Activated B cell treated with CpG ODN at 0.5 μM for 24 hours (primary cell): ENCODE measurements at regions of chr1 and their contacts with region 1.

Region 1: DNA sequence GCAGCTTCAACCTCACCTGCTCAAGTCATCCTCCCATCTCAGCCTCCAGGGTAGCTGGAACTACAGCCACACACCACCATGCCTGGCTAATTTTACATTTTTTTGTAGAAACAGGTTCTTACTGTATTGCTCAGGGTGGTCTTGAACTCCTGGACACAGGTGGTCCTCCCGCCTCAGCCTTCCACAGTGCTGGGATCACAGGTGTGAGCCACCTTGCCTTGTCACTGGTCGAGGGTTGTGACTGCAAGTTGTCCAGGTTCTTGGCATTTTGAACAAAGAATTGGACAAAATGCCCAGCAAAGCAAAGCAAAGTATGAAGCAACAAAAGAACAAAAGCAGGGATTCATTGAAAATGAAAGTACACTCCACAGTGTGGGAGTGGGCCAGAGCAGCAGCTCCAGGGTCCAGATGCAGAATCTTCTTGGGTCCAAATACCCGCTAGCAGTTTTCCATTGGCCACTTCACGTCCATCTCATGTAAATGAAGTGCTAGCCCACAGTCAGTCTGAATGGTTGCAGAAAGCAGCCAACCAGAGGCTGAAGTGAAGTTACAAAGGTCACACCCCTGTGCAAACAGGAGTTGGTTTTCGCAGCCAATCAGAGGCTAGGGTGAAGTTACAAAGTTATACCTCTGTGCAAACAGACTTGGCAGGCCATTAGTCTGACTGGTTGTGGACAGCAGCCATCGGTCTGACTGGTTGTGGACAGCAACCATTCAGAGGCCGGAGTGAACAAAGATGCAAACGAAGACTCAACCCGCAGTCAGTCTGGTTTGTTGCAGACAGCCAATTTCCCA is 109.5 kb upstream of the KIF26B start:
- DNase-seq: no peak
- ATAC-seq: no peak
- H3K4me3 Mint-ChIP-seq: no peak overlapping the region
- H3K27ac Mint-ChIP-seq: no peak overlapping the region
- H3K4me1 Mint-ChIP-seq: no peaks in the 10 kb centered on the region
- H3K27me3 Mint-ChIP-seq: no peaks in the 10 kb centered on the region
- CTCF ChIP-seq: no peak

Region 2: DNA sequence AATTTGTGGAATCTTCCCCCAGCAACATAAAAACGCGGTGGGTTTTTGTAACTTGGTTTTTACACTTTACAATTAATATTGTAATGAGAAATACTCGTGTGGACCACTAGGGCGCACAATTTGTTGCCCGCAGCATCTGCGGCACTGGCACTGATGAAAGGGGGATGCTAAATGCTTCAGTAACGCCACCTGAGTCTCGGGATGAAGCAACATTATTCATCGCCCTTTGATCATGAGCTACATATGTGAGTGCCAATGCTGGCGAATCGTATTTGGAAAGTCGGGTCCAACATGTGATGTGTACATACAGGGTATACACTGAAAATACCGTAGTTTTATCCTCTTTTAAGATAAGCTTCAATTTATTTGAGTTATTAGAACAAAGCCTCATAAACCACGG is 244.0 kb before region 1 on chr1:
- CTCF ChIA-PET with region 1: interaction called, 135 read pairs
- POLR2A ChIA-PET with region 1: interaction called, 15 read pairs
- intact Hi-C with region 1: loop called (anchors 1 kb)
- DNase-seq: peak; percentile 36
- ATAC-seq: peak; percentile 96
- H3K4me3 Mint-ChIP-seq: peak overlapping the region; percentile 55
- H3K27ac Mint-ChIP-seq: peak overlapping the region; percentile 59
- H3K4me1 Mint-ChIP-seq: peaks cover 5% of the 10 kb centered on the region
- H3K27me3 Mint-ChIP-seq: peaks cover 8% of the 10 kb centered on the region
- CTCF ChIP-seq: no peak

Region 3: DNA sequence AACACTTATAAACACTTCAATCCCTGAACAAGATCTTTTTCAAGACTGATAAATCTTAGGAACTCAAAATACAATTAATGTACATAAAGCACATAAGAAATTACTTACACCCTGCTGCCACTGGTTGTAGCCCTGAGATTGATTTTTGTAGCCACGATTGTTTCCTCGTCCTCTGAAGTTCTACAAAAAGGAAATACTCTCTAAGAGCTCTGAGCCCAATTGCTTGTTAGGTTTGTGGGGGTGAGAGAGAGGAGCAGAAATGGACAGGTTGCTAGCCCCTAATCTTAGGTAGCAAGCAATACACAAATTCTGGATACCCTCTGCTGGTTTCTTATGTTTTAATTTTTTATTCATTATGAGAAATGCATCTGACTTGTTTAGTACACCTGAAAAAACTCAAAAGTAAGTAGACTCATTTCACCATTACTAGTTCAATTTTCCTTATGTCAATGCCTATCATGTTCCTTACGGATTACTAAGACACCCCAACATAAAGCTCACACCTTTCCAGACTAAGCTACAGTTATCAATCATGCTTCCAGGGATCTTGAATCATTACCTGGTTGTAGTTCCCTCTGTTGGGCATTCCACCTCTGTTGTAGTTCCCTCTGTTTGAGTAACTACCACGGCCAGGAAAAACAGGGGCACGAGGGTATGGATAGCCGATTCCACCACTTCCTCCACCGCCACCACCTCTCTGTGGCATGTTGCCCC is 190.3 kb before region 1 on chr1:
- CTCF ChIA-PET with region 1: interaction called, 56 read pairs
- POLR2A ChIA-PET with region 1: no interaction called
- intact Hi-C with region 1: no loop called
- DNase-seq: no peak
- ATAC-seq: no peak
- H3K4me3 Mint-ChIP-seq: no peak overlapping the region
- H3K27ac Mint-ChIP-seq: peak overlapping the region; percentile 70
- H3K4me1 Mint-ChIP-seq: peaks cover 64% of the 10 kb centered on the region
- H3K27me3 Mint-ChIP-seq: no peaks in the 10 kb centered on the region
- CTCF ChIP-seq: no peak

Region 4: GRCh38 chr1:244945109-244945671 is 100.1 kb before region 1 on chr1:
- CTCF ChIA-PET with region 1: interaction called, 10 read pairs
- POLR2A ChIA-PET with region 1: interaction called, 4 read pairs
- intact Hi-C with region 1: loop called (anchors 1 kb)
- DNase-seq: no peak
- ATAC-seq: peak; percentile 29
- H3K4me3 Mint-ChIP-seq: peak overlapping the region; percentile 55
- H3K27ac Mint-ChIP-seq: peak overlapping the region; percentile 82
- H3K4me1 Mint-ChIP-seq: peaks cover 35% of the 10 kb centered on the region
- H3K27me3 Mint-ChIP-seq: no peaks in the 10 kb centered on the region
- CTCF ChIP-seq: no peak

Region 5: DNA sequence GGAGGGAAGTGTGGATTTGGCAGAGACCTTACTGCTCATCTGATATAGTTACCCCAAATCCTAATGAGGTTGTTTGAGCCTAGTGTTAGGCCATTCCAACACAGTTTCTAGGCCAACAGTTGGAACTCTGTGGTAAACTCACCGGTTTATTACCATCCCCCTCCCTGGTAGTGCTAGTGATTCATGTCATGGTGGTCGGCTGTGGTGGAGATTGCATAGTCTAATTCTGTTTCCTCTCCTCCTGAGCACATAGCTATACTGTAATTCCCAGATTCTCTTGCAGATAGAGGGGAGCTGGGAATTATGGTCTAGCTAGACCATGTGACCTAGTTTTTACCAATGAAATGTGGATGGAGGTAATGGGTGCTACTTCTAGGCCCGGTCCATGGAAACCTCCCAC is 14.2 kb before region 1 on chr1:
- CTCF ChIA-PET with region 1: interaction called, 18 read pairs
- POLR2A ChIA-PET with region 1: no interaction called
- intact Hi-C with region 1: no loop called
- DNase-seq: no peak
- ATAC-seq: no peak
- H3K4me3 Mint-ChIP-seq: no peak overlapping the region
- H3K27ac Mint-ChIP-seq: no peak overlapping the region
- H3K4me1 Mint-ChIP-seq: no peaks in the 10 kb centered on the region
- H3K27me3 Mint-ChIP-seq: no peaks in the 10 kb centered on the region
- CTCF ChIP-seq: no peak

Region 6: GRCh38 chr1:245099401-245099800 is 54.1 kb after region 1 on chr1:
- CTCF ChIA-PET with region 1: no interaction called
- POLR2A ChIA-PET with region 1: no interaction called
- intact Hi-C with region 1: no loop called
- DNase-seq: no peak
- ATAC-seq: no peak
- H3K4me3 Mint-ChIP-seq: no peak overlapping the region
- H3K27ac Mint-ChIP-seq: no peak overlapping the region
- H3K4me1 Mint-ChIP-seq: no peaks in the 10 kb centered on the region
- H3K27me3 Mint-ChIP-seq: no peaks in the 10 kb centered on the region
- CTCF ChIP-seq: no peak